CD4-positive, alpha-beta T cell (primary cell): ENCODE measurements at regions of chr13 and their contacts with region 1.

Region 1: GRCh38 chr13:99269627-99270241 is 11.6 kb upstream of the GPR18 start:
- DNase-seq: peak in 5 of 14 experiments; percentile 32 to 86 (median 79)
- ATAC-seq: peak; percentile 80
- H3K4me3 ChIP-seq: no peak overlapping the region
- H3K4me3 Mint-ChIP-seq: no peak overlapping the region
- H3K27ac ChIP-seq: no peak overlapping the region
- H3K27ac Mint-ChIP-seq: peak overlapping the region; percentile 87
- H3K4me1 ChIP-seq: peaks cover 32% of the 10 kb centered on the region
- H3K4me1 Mint-ChIP-seq: peaks cover 78% of the 10 kb centered on the region
- H3K27me3 ChIP-seq: no peaks in the 10 kb centered on the region
- H3K27me3 Mint-ChIP-seq: no peaks in the 10 kb centered on the region
- CTCF ChIP-seq: peak; percentile 94

Region 2: DNA sequence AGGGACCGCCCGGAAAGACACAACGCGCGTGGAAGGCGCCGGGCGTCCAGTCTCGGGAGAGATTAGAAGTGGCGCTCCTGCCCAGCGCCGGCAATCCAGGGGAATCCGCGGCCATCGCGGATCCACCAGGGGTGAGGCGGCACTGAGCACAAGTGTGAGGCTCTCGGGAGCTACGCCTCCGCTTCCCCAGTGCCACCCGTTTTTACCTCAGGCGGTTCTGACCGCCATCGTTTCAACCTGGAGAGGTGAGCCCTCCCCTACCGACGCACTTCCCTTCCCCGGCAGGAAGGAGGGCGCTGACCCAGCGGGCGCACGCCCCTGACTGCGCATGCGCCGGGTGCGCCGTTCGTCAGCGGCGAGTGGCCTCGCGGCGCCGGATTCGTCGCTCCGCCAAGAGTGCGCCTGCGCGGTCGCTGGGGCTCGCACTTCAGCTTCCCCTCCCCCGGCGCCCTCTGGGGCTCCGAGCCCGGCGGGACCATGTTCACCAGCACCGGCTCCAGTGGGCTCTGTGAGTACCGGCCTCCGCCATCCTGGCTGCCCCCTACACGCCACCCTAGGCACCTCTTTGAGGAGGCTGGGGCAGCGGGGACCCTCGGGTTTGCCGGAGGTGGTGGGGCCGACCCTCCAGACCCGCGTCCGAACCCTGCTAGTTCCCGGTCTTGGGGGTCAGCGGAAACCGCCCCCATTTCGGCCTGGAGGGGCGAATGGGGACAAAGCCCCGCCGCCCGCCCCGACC is 69.1 kb before region 1 on chr13 and contains the start of gene UBAC2:
- CTCF ChIA-PET with region 1: interaction called, 28 read pairs
- POLR2A ChIA-PET with region 1: interaction called, 45 read pairs
- intact Hi-C with region 1: loop called (anchors 1 kb)
- DNase-seq: peak; percentile 90 to 100 (median 97)
- ATAC-seq: peak; percentile 79
- H3K4me3 ChIP-seq: peak within 1 kb of the TSS; percentile 99
- H3K4me3 Mint-ChIP-seq: peak within 1 kb of the TSS; percentile 95
- H3K27ac ChIP-seq: peak within 1 kb of the TSS; percentile 97 to 99
- H3K27ac Mint-ChIP-seq: peak within 1 kb of the TSS; percentile 93
- H3K4me1 ChIP-seq: peaks cover 36% of the 10 kb centered on the region
- H3K4me1 Mint-ChIP-seq: peaks cover 67% of the 10 kb centered on the region
- H3K27me3 ChIP-seq: no peaks in the 10 kb centered on the region
- H3K27me3 Mint-ChIP-seq: no peaks in the 10 kb centered on the region
- CTCF ChIP-seq: no peak
- total RNA-seq, gene UBAC2: 59.8 to 67.4 TPM

Region 3: GRCh38 chr13:99301913-99302636 is 32.3 kb after region 1 on chr13:
- CTCF ChIA-PET with region 1: interaction called, 44 read pairs
- POLR2A ChIA-PET with region 1: interaction called, 42 read pairs
- intact Hi-C with region 1: loop called (anchors 2 to 5 kb)
- DNase-seq: no peak
- ATAC-seq: no peak
- H3K4me3 ChIP-seq: peak overlapping the region; percentile 83
- H3K4me3 Mint-ChIP-seq: peak overlapping the region; percentile 97
- H3K27ac ChIP-seq: peak overlapping the region; percentile 68 to 74
- H3K27ac Mint-ChIP-seq: peak overlapping the region; percentile 89
- H3K4me1 ChIP-seq: peaks cover 42% of the 10 kb centered on the region
- H3K4me1 Mint-ChIP-seq: peaks cover 72% of the 10 kb centered on the region
- H3K27me3 ChIP-seq: no peaks in the 10 kb centered on the region
- H3K27me3 Mint-ChIP-seq: no peaks in the 10 kb centered on the region
- CTCF ChIP-seq: no peak

Region 4: GRCh38 chr13:99347911-99348451 is 78.2 kb after region 1 on chr13:
- CTCF ChIA-PET with region 1: interaction called, 19 read pairs
- POLR2A ChIA-PET with region 1: interaction called, 18 read pairs
- intact Hi-C with region 1: loop called in 1 of 2 experiments (anchors 2 kb)
- DNase-seq: no peak
- ATAC-seq: no peak
- H3K4me3 ChIP-seq: no peak overlapping the region
- H3K4me3 Mint-ChIP-seq: no peak overlapping the region
- H3K27ac ChIP-seq: peak overlapping the region in 1 of 2 donors; percentile 38
- H3K27ac Mint-ChIP-seq: peak overlapping the region; percentile 97
- H3K4me1 ChIP-seq: peaks cover 84% of the 10 kb centered on the region
- H3K4me1 Mint-ChIP-seq: peaks cover 92% of the 10 kb centered on the region
- H3K27me3 ChIP-seq: no peaks in the 10 kb centered on the region
- H3K27me3 Mint-ChIP-seq: no peaks in the 10 kb centered on the region
- CTCF ChIP-seq: no peak

Region 5: DNA sequence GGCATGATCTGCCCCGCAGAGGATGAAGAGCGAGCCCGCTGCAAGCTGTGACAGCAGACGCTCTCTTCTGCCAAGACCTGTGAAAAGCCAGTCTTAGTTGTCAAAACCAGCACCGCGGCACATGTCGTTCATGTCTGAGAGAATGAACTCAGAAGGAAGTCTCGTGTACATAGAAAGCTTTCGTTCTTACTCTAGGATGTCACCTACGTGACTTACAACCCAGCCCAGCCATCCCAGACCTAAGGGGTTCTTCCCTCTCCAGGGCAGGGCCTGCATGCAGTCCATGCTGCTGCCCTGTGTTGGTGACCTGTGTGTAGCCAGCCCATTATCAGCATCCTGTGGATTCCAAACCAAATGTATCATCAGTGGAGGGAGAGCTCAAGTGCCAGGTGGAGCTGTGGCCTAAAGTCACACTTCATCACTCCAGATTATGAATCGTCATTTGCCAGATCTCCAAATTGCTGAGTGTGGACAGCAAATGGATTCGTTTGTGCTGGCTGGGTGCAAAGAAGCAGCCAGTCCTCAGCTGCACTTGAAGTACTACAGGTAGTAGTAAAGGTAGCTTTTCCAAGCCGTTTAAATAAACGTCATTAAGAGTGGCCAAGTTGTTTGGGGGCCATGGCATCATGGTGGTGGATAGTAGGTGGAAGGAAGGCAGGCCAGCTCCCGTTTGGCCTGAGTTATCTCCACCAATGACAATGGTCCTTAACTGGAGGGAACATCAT is 111.3 kb after region 1 on chr13:
- CTCF ChIA-PET with region 1: interaction called, 9 read pairs
- POLR2A ChIA-PET with region 1: interaction called, 35 read pairs
- intact Hi-C with region 1: loop called in 1 of 2 experiments (anchors 1 kb)
- DNase-seq: peak in 13 of 14 experiments; percentile 42 to 77 (median 57)
- ATAC-seq: peak; percentile 40
- H3K4me3 ChIP-seq: no peak overlapping the region
- H3K4me3 Mint-ChIP-seq: peak overlapping the region; percentile 65
- H3K27ac ChIP-seq: peak overlapping the region; percentile 65 to 87
- H3K27ac Mint-ChIP-seq: peak overlapping the region; percentile 88
- H3K4me1 ChIP-seq: peaks cover 89% of the 10 kb centered on the region
- H3K4me1 Mint-ChIP-seq: peaks cover 95% of the 10 kb centered on the region
- H3K27me3 ChIP-seq: no peaks in the 10 kb centered on the region
- H3K27me3 Mint-ChIP-seq: no peaks in the 10 kb centered on the region
- CTCF ChIP-seq: no peak

Region 6: GRCh38 chr13:99436686-99437416 is 167.1 kb after region 1 on chr13:
- CTCF ChIA-PET with region 1: interaction called, 189 read pairs
- POLR2A ChIA-PET with region 1: interaction called, 55 read pairs
- intact Hi-C with region 1: loop called (anchors 1 kb)
- DNase-seq: peak; percentile 91 to 98 (median 94)
- ATAC-seq: peak; percentile 52
- H3K4me3 ChIP-seq: peak overlapping the region; percentile 32
- H3K4me3 Mint-ChIP-seq: peak overlapping the region; percentile 47
- H3K27ac ChIP-seq: peak overlapping the region in 1 of 2 donors; percentile 11
- H3K27ac Mint-ChIP-seq: peak overlapping the region; percentile 84
- H3K4me1 ChIP-seq: peaks cover 57% of the 10 kb centered on the region
- H3K4me1 Mint-ChIP-seq: peaks cover 64% of the 10 kb centered on the region
- H3K27me3 ChIP-seq: no peaks in the 10 kb centered on the region
- H3K27me3 Mint-ChIP-seq: no peaks in the 10 kb centered on the region
- CTCF ChIP-seq: peak; percentile 100

Region 7: GRCh38 chr13:99792079-99792921 is 522.6 kb after region 1 on chr13:
- CTCF ChIA-PET with region 1: no interaction called
- POLR2A ChIA-PET with region 1: no interaction called
- intact Hi-C with region 1: no loop called
- DNase-seq: no peak
- ATAC-seq: no peak
- H3K4me3 ChIP-seq: no peak overlapping the region
- H3K4me3 Mint-ChIP-seq: no peak overlapping the region
- H3K27ac ChIP-seq: no peak overlapping the region
- H3K27ac Mint-ChIP-seq: no peak overlapping the region
- H3K4me1 ChIP-seq: no peaks in the 10 kb centered on the region
- H3K4me1 Mint-ChIP-seq: no peaks in the 10 kb centered on the region
- H3K27me3 ChIP-seq: no peaks in the 10 kb centered on the region
- H3K27me3 Mint-ChIP-seq: no peaks in the 10 kb centered on the region
- CTCF ChIP-seq: no peak